ENCODE measurements at regions of chr13 and their contacts with region 1.

Region 1: GRCh38 chr13:95480131-95480545 is 72.4 kb upstream of the CLDN10 start:
- DNase-seq: peak in 1 of 9 experiments; percentile 23
- ATAC-seq: no peak
- H3K4me3 ChIP-seq: no peak overlapping the region
- H3K4me3 Mint-ChIP-seq: no peak overlapping the region
- H3K27ac ChIP-seq: no peak overlapping the region
- H3K27ac Mint-ChIP-seq: no peak overlapping the region
- H3K4me1 ChIP-seq: no peaks in the 10 kb centered on the region
- H3K4me1 Mint-ChIP-seq: peaks cover 4% of the 10 kb centered on the region
- H3K27me3 ChIP-seq: no peaks in the 10 kb centered on the region
- H3K27me3 Mint-ChIP-seq: peaks cover 5% of the 10 kb centered on the region
- CTCF ChIP-seq: no peak

Region 2: DNA sequence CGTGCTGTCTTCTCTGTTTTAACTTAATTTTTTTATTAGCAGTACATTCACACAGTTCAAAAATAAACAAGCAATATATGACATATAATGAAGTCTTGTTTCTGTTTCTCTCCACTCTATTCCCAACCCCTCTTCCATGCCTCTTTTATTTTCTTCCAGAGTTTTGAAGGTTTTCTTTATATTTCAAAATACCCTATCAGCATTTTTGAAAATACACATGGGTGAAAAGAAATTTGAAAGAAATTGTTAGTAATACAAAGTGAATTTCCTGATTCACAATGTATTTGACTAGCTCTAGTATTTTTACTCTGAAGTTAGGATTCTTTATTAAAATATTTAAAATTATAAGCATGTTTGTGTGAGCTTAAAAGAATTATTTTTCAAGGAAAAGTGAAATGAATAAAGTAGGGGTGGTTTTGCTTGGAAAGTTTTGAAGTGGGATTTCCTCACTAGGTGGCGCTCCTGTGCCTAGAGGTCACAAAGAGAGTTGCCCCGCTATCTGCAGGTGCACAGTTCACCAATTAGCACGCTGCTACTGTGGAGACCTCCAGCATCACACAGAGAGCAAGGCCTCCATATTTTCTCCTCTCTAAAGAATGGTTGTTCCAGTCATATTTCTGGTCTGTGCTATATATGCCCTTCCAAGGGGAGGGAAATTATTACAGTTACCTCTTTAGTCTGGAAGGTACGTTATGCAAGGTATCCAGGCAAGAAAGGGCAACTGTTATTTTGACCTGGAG is 805.4 kb before region 1 on chr13:
- CTCF ChIA-PET with region 1: interaction called, 3 read pairs
- POLR2A ChIA-PET with region 1: no interaction called
- intact Hi-C with region 1: loop called in 1 of 2 experiments (anchors 5 kb)
- DNase-seq: peak in 8 of 9 experiments; percentile 17 to 60 (median 50)
- ATAC-seq: peak; percentile 52
- H3K4me3 ChIP-seq: no peak overlapping the region
- H3K4me3 Mint-ChIP-seq: no peak overlapping the region
- H3K27ac ChIP-seq: no peak overlapping the region
- H3K27ac Mint-ChIP-seq: no peak overlapping the region
- H3K4me1 ChIP-seq: no peaks in the 10 kb centered on the region
- H3K4me1 Mint-ChIP-seq: no peaks in the 10 kb centered on the region
- H3K27me3 ChIP-seq: no peaks in the 10 kb centered on the region
- H3K27me3 Mint-ChIP-seq: peaks cover 22% of the 10 kb centered on the region
- CTCF ChIP-seq: peak; percentile 87

Region 3: DNA sequence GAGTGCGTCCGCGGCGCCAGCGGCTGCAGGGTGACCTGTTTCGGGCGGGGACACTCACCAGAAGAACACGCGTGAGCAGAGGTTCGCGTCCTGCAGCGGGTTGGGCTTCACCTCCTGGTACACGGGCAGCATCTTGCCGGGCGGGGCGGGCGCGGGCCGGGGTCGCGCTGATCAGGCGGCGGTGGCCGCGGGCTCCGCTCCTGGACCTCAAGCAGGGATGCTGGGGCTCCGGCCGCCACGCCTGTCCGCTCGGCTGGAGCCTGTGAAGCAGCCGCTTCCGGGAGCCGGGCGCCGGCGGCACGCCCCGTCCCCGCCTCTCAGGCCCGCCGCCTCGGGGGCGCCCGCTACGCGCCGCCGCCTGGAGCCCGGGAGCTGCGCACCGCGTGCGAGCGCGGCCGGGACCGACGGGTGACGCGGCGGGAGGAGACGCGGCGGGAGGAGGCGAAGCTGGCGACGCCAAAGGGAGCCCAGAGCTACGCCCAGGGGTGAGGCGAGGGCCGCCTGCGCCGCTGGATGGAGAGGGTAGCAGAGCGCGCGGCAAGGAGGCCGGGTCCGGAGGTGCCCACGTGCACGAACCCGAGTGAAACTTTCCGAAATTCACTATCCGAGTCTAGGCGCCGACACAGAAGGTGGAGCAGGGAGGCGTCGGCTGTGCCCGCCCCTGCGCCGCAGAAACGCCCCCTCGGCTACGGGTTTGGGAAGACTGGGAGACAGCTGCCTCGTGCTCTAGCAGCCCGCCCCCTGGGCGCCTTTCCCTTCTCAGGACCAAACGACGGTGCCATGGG is 178.8 kb before region 1 on chr13 and contains the start of gene ABCC4:
- CTCF ChIA-PET with region 1: interaction called, 3 read pairs
- POLR2A ChIA-PET with region 1: no interaction called
- intact Hi-C with region 1: loop called in 1 of 2 experiments (anchors 1 kb)
- DNase-seq: peak in 8 of 9 experiments; percentile 33 to 75 (median 50)
- ATAC-seq: peak; percentile 77
- H3K4me3 ChIP-seq: peak within 1 kb of the TSS; percentile 74 to 79
- H3K4me3 Mint-ChIP-seq: peak within 1 kb of the TSS; percentile 82
- H3K27ac ChIP-seq: no peak within 1 kb of the TSS
- H3K27ac Mint-ChIP-seq: peak within 1 kb of the TSS; percentile 12
- H3K4me1 ChIP-seq: peaks cover 8% of the 10 kb centered on the region
- H3K4me1 Mint-ChIP-seq: peaks cover 24% of the 10 kb centered on the region
- H3K27me3 ChIP-seq: no peaks in the 10 kb centered on the region
- H3K27me3 Mint-ChIP-seq: no peaks in the 10 kb centered on the region
- CTCF ChIP-seq: no peak
- total RNA-seq, gene ABCC4: 3.3 to 3.4 TPM

Region 4: GRCh38 chr13:95447814-95448213 is 32.3 kb before region 1 on chr13:
- CTCF ChIA-PET with region 1: interaction called, 12 read pairs
- POLR2A ChIA-PET with region 1: no interaction called
- intact Hi-C with region 1: no loop called
- DNase-seq: no peak
- ATAC-seq: no peak
- H3K4me3 ChIP-seq: no peak overlapping the region
- H3K4me3 Mint-ChIP-seq: no peak overlapping the region
- H3K27ac ChIP-seq: no peak overlapping the region
- H3K27ac Mint-ChIP-seq: no peak overlapping the region
- H3K4me1 ChIP-seq: no peaks in the 10 kb centered on the region
- H3K4me1 Mint-ChIP-seq: peaks cover 3% of the 10 kb centered on the region
- H3K27me3 ChIP-seq: peaks cover 0 to 5% of the 10 kb centered on the region in 2 experiments
- H3K27me3 Mint-ChIP-seq: peaks cover 16% of the 10 kb centered on the region
- CTCF ChIP-seq: no peak